Activated T-helper 1 cell treated with anti-CD3 and anti-CD28 coated beads, Interleukin-12 subunit alpha, Interleukin-12 subunit beta, Interleukin-2, Interleukin-4 antibody, amounts not matched to agents 30 ng/mL and 10 ng/mL and 1 ng/mL, durations not matched to agents 14 hours and 24 hours and 36 hours (primary cell): ENCODE measurements at regions of chr9 and their contacts with region 1.

Region 1: DNA sequence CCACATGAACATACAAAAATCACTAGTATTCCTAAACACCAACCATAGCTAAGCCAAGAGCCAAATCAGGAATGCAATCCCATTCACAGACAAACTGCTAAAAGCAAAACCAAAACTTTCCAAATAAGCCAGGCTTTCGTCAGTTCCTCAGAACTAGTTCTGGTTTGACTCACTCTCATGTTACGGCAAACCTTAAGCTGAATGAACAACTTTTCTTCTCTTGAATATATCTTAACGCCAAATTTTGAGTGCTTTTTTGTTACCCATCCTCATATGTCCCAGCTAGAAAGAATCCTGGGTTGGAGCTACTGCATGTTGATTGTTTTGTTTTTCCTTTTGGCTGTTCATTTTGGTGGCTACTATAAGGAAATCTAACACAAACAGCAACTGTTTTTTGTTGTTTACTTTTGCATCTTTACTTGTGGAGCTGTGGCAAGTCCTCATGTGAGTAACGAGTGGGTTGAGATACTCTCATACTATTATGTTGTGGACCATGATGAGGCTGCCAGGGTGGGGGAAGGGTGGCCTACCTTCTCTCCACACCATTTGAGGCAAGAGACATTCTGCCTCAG is at the start of gene PDCD1LG2:
- DNase-seq: peak; percentile 41
- H3K4me3 Mint-ChIP-seq: peak within 1 kb of the TSS; percentile 82
- H3K27ac Mint-ChIP-seq: peak within 1 kb of the TSS; percentile 96
- H3K4me1 Mint-ChIP-seq: peaks cover 68% of the 10 kb centered on the region
- H3K27me3 Mint-ChIP-seq: no peaks in the 10 kb centered on the region
- total RNA-seq, gene PDCD1LG2: 1.1 and 1.4 TPM in 2 replicates

Region 2: GRCh38 chr9:5421163-5421562 is 89.3 kb before region 1 on chr9:
- intact Hi-C with region 1: no loop called
- DNase-seq: no peak
- H3K4me3 Mint-ChIP-seq: no peak overlapping the region
- H3K27ac Mint-ChIP-seq: no peak overlapping the region
- H3K4me1 Mint-ChIP-seq: peaks cover 22% of the 10 kb centered on the region
- H3K27me3 Mint-ChIP-seq: no peaks in the 10 kb centered on the region

Region 3: DNA sequence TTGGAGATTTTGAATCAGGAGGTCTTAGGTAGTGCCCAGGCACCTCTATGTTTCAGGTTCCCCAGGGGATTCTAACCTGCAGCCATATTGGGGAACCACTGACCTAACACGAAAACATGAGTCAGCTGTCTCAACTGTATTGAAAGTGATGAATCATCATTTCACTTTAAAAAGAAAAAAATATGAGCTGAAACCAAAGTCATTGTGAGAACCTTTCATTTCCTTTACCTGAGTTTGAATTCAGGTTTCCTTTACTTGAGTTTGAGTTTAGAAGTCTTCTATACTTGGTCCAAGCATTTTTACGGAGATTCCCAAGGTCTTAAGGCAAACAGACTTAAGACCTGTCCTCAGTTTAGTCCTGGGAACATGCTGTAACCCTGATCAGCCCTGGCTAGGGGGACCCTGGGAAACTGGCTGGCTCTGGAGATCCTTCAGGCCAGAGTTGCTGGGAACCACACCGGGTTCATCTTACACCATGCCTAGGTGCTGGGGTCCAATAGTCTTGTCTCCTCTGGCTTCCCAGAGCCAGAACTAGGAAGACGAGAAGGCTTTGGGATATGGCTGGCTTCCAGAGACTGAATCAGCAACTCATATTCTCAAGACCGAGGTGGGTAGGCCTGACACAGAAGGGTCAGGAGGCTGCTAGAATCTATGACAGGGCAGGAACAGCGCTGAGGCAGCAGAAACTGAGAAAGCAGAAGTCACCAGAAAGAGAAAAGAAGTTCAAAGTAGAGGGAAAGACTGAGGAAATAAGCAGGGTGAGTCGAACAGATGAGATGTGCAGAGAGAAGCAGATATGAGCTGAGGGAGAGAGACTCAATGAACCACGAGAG is 16.6 kb before region 1 on chr9:
- intact Hi-C with region 1: loop called (anchors 1 kb)
- DNase-seq: peak; percentile 20
- H3K4me3 Mint-ChIP-seq: peak overlapping the region; percentile 45
- H3K27ac Mint-ChIP-seq: peak overlapping the region; percentile 86
- H3K4me1 Mint-ChIP-seq: peaks cover 17% of the 10 kb centered on the region
- H3K27me3 Mint-ChIP-seq: no peaks in the 10 kb centered on the region

Region 4: GRCh38 chr9:5543875-5544702 is 33.6 kb after region 1 on chr9:
- intact Hi-C with region 1: loop called (anchors 1 kb)
- DNase-seq: no peak
- H3K4me3 Mint-ChIP-seq: no peak overlapping the region
- H3K27ac Mint-ChIP-seq: peak overlapping the region; percentile 22
- H3K4me1 Mint-ChIP-seq: peaks cover 42% of the 10 kb centered on the region
- H3K27me3 Mint-ChIP-seq: no peaks in the 10 kb centered on the region

Region 5: GRCh38 chr9:5557606-5558587 is 47.5 kb after region 1 on chr9:
- intact Hi-C with region 1: loop called (anchors 1 kb)
- DNase-seq: peak; percentile 71
- H3K4me3 Mint-ChIP-seq: peak overlapping the region; percentile 65
- H3K27ac Mint-ChIP-seq: peak overlapping the region; percentile 84
- H3K4me1 Mint-ChIP-seq: peaks cover 55% of the 10 kb centered on the region
- H3K27me3 Mint-ChIP-seq: no peaks in the 10 kb centered on the region